ENCODE measurements at regions of chr4 and their contacts with region 1.

Region 1: GRCh38 chr4:101347557-101348366 is 436 bp upstream of the PPP3CA start:
- DNase-seq: peak; percentile 97 to 99 (median 98)
- H3K4me3 ChIP-seq: peak overlapping the region; percentile 96 to 99
- H3K4me3 Mint-ChIP-seq: peak overlapping the region; percentile 93 to 99 (median 97)
- H3K27ac ChIP-seq: peak overlapping the region; percentile 81
- H3K27ac Mint-ChIP-seq: peak overlapping the region; percentile 95 to 98 (median 96)
- H3K4me1 ChIP-seq: peaks cover 33% of the 10 kb centered on the region
- H3K4me1 Mint-ChIP-seq: peaks cover 24 to 39% (median 34%) of the 10 kb centered on the region in 4 donors
- H3K27me3 ChIP-seq: no peaks in the 10 kb centered on the region
- H3K27me3 Mint-ChIP-seq: peaks cover 0 to 5% of the 10 kb centered on the region in 2 donors

Region 2: DNA sequence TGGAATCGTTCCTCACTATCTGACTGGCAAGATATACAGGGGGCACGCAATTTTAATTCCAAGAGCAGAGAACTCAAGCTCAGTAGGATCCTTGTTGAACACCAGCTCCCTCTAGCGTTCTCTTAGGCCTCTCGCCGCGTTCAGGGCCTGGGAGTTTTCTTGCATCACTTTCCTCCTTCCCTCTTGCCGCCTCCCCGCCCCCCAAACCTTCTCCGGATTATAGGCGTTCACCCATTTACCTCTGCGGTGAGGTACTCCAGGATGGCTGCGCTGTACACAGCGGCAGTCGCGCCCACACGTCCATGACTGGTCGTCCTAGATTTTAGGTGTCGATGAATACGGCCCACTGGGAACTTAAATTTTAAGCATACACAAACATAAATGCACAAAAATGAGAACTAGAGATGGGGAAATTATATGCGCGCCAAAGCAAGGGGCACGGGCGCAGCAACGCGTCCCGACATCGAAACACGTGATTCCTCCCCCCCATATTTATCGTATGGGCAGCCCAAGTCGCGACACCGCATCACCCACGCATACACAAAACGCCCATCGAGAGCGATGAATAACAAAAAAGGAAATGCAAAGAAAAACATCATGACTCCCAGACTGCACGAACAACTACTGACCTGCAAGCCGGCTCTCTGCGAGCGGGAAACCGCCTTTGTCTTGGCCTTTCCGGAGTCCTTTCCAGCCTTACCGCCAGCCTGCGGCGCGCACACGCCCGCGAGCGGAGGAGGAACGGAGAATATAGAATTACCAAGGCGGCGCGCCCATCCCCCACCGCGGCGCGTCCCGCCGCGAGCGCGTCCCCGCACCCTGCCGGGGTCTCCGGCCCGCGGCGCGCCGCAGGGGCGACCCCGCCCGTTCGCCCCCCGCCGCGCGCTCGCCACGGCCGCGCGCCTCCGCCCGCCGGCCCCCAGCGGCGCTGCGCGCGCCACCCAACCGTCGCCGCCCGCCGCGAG is 1398.4 kb before region 1 on chr4:
- CTCF ChIA-PET with region 1: no interaction called
- POLR2A ChIA-PET with region 1: interaction called, 4 read pairs
- intact Hi-C with region 1: loop called (anchors 2 kb)
- DNase-seq: peak; percentile 87 to 94 (median 88)
- H3K4me3 ChIP-seq: peak overlapping the region; percentile 90 to 98
- H3K4me3 Mint-ChIP-seq: no peak overlapping the region
- H3K27ac ChIP-seq: peak overlapping the region; percentile 86
- H3K27ac Mint-ChIP-seq: no peak overlapping the region
- H3K4me1 ChIP-seq: peaks cover 53% of the 10 kb centered on the region
- H3K4me1 Mint-ChIP-seq: peaks cover 24 to 33% (median 32%) of the 10 kb centered on the region in 4 donors
- H3K27me3 ChIP-seq: no peaks in the 10 kb centered on the region
- H3K27me3 Mint-ChIP-seq: no peaks in the 10 kb centered on the region

Region 3: GRCh38 chr4:100962698-100963097 is 385.1 kb before region 1 on chr4:
- CTCF ChIA-PET with region 1: no interaction called
- POLR2A ChIA-PET with region 1: no interaction called
- intact Hi-C with region 1: no loop called
- DNase-seq: no peak
- H3K4me3 ChIP-seq: no peak overlapping the region
- H3K4me3 Mint-ChIP-seq: no peak overlapping the region
- H3K27ac ChIP-seq: no peak overlapping the region
- H3K27ac Mint-ChIP-seq: no peak overlapping the region
- H3K4me1 ChIP-seq: no peaks in the 10 kb centered on the region
- H3K4me1 Mint-ChIP-seq: no peaks in the 10 kb centered on the region
- H3K27me3 ChIP-seq: no peaks in the 10 kb centered on the region
- H3K27me3 Mint-ChIP-seq: peaks cover 0 to 1% of the 10 kb centered on the region in 2 donors

Region 4: DNA sequence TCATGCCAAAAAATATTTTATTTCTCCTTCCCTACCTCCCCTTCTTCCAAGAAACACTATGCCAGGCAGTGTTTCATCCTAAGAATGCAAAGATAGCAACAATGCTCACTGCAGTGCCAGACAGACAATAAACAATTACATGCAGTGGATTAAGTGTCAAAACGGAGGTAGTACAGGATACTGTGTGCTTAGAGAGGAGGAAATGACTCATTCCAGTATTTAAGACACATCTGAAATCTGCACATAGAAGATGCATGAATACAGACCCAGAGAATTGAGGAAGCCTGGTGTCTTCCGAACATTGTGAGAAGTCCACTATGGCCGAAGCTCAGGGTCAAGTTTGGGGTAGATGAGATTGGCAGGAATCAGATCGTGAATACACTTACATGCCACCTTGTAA is 326.8 kb before region 1 on chr4:
- CTCF ChIA-PET with region 1: interaction called, 12 read pairs
- POLR2A ChIA-PET with region 1: interaction called, 53 read pairs
- intact Hi-C with region 1: loop called (anchors 1 kb)
- DNase-seq: peak; percentile 40 to 58 (median 47)
- H3K4me3 ChIP-seq: peak overlapping the region in 1 of 2 donors; percentile 37
- H3K4me3 Mint-ChIP-seq: peak overlapping the region; percentile 46 to 80 (median 72)
- H3K27ac ChIP-seq: peak overlapping the region; percentile 51
- H3K27ac Mint-ChIP-seq: peak overlapping the region; percentile 48 to 97 (median 89)
- H3K4me1 ChIP-seq: peaks cover 64% of the 10 kb centered on the region
- H3K4me1 Mint-ChIP-seq: peaks cover 39 to 71% (median 53%) of the 10 kb centered on the region in 4 donors
- H3K27me3 ChIP-seq: no peaks in the 10 kb centered on the region
- H3K27me3 Mint-ChIP-seq: no peaks in the 10 kb centered on the region

Region 5: DNA sequence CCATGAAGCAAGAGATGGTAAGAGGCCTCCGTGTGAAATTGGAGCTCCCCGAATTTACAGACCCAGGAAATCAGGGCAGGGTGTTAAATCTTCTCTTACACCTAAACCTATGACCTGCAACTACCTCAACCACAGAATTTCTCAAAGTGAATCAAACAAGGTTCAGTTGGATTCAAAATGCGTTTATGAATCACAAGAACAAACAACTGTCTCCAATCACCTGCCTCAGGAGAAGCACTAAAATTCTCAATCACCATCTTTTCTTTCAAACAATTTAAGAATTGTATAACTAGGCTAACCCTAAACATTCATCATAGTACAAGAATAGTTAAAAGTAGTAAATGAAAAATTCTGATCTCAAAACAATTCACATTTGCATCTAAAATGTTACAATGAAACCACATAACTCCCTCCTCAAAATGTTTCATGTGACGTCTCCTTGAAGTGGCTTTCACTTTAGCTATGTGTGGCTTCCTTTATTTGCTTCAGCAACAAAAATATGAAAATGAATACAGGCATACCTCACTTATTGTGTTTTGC is 19.6 kb before region 1 on chr4:
- CTCF ChIA-PET with region 1: interaction called, 6 read pairs
- POLR2A ChIA-PET with region 1: interaction called, 53 read pairs
- intact Hi-C with region 1: loop called (anchors 1 kb)
- DNase-seq: peak; percentile 63 to 77 (median 70)
- H3K4me3 ChIP-seq: no peak overlapping the region
- H3K4me3 Mint-ChIP-seq: peak overlapping the region; percentile 76 to 91 (median 83)
- H3K27ac ChIP-seq: peak overlapping the region; percentile 42
- H3K27ac Mint-ChIP-seq: peak overlapping the region; percentile 84 to 97 (median 92)
- H3K4me1 ChIP-seq: peaks cover 48% of the 10 kb centered on the region
- H3K4me1 Mint-ChIP-seq: peaks cover 44 to 95% (median 73%) of the 10 kb centered on the region in 4 donors
- H3K27me3 ChIP-seq: no peaks in the 10 kb centered on the region
- H3K27me3 Mint-ChIP-seq: no peaks in the 10 kb centered on the region

Region 6: GRCh38 chr4:101596781-101597552 is 249.2 kb after region 1 on chr4:
- CTCF ChIA-PET with region 1: interaction called, 4 read pairs
- POLR2A ChIA-PET with region 1: no interaction called
- intact Hi-C with region 1: loop called (anchors 5 kb)
- DNase-seq: peak in 4 of 5 donors; percentile 22 to 42 (median 33)
- H3K4me3 ChIP-seq: no peak overlapping the region
- H3K4me3 Mint-ChIP-seq: no peak overlapping the region
- H3K27ac ChIP-seq: no peak overlapping the region
- H3K27ac Mint-ChIP-seq: peak overlapping the region in 1 of 7 donors; percentile 4
- H3K4me1 ChIP-seq: no peaks in the 10 kb centered on the region
- H3K4me1 Mint-ChIP-seq: peaks cover 0 to 2% (median 0%) of the 10 kb centered on the region in 4 donors
- H3K27me3 ChIP-seq: no peaks in the 10 kb centered on the region
- H3K27me3 Mint-ChIP-seq: peaks cover 0 to 1% of the 10 kb centered on the region in 2 donors

Region 7: GRCh38 chr4:102868781-102869568 is 1521.2 kb after region 1 on chr4 and contains the start of gene CISD2:
- CTCF ChIA-PET with region 1: no interaction called
- POLR2A ChIA-PET with region 1: interaction called, 3 read pairs
- intact Hi-C with region 1: loop called (anchors 2 kb)
- DNase-seq: peak; percentile 92 to 94 (median 92)
- H3K4me3 ChIP-seq: peak within 1 kb of the TSS; percentile 58 to 74
- H3K4me3 Mint-ChIP-seq: peak within 1 kb of the TSS; percentile 91 to 99 (median 95)
- H3K27ac ChIP-seq: peak within 1 kb of the TSS; percentile 91
- H3K27ac Mint-ChIP-seq: peak within 1 kb of the TSS; percentile 95 to 100 (median 99)
- H3K4me1 ChIP-seq: peaks cover 54% of the 10 kb centered on the region
- H3K4me1 Mint-ChIP-seq: peaks cover 39 to 82% (median 50%) of the 10 kb centered on the region in 4 donors
- H3K27me3 ChIP-seq: no peaks in the 10 kb centered on the region
- H3K27me3 Mint-ChIP-seq: no peaks in the 10 kb centered on the region
- total RNA-seq, gene CISD2: 18.5 to 22.0 TPM